Astrocyte of the cerebellum (primary cell): ENCODE measurements at regions of chr1 and their contacts with region 1.

Region 1: DNA sequence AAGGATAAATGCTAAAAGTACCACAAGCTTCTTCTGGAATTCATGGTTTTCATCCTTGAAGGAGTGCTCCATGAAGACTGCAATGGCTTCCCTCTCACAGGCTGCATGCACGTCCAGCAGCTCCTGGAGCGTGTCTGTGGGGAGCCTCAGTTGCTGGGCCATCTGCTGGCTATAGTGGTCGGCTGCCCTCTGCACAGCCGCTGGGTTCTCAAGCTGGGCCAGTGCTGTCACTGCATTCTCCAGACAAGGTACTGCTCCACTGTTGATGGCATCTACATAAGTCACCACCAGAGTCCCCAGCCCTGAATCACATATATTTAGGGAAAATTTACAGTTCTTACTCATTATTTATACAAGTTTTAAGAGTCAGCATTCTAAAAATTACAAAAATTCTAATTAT is 8.7 kb downstream of the GBP4 start:
- DNase-seq: no peak
- H3K4me3 ChIP-seq: no peak overlapping the region
- CTCF ChIP-seq: no peak

Region 2: DNA sequence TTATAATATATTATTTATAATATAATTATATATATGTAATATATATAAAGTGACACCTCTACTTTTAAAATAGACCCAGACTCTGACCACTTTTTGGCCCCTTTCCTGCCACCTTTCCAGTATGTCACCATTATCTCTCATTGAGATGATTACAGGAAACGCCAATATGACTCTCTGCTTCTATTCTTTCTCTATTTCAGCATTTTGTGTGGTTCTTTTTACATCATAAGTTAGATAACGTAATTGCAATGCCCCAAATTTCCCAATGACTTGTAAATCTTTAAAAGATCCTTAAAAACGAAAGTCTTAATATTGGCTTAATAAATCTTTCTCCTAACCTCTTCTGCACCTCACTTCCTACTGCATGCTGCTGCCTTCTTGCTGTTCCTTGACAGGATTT is 90.7 kb after region 1 on chr1:
- in situ Hi-C with region 1: loop called (anchors 5 kb)
- DNase-seq: no peak
- H3K4me3 ChIP-seq: no peak overlapping the region
- CTCF ChIP-seq: no peak